T-cell (primary cell): ENCODE measurements at regions of chr12 and their contacts with region 1.

Region 1: DNA sequence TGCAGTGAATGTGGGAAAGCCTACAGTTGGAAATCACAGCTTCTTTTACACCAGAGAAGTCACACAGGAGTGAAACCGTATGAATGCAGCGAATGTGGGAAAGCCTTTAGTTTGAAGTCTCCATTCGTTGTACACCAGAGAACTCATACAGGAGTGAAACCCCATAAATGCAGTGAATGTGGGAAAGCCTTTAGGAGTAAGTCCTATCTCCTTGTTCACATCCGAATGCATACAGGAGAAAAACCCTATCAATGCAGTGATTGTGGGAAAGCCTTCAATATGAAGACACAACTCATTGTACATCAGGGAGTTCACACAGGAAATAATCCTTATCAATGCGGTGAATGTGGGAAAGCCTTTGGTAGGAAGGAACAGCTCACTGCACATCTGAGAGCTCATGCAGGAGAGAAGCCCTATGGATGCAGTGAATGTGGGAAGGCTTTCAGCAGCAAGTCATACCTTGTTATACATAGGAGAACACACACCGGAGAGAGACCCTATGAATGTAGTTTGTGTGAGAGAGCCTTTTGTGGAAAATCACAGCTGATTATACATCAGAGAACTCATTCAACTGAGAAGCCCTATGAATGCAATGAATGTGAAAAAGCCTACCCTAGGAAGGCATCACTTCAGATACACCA is 24.6 kb downstream of the ZNF26 start:
- DNase-seq: no peak
- ATAC-seq: no peak
- H3K4me3 ChIP-seq: peak overlapping the region in 1 of 2 donors; percentile 38
- H3K4me3 Mint-ChIP-seq: no peak overlapping the region
- H3K27ac ChIP-seq: no peak overlapping the region
- H3K27ac Mint-ChIP-seq: no peak overlapping the region
- H3K4me1 ChIP-seq: no peaks in the 10 kb centered on the region
- H3K4me1 Mint-ChIP-seq: no peaks in the 10 kb centered on the region
- H3K27me3 ChIP-seq: no peaks in the 10 kb centered on the region
- H3K27me3 Mint-ChIP-seq: no peaks in the 10 kb centered on the region

Region 2: DNA sequence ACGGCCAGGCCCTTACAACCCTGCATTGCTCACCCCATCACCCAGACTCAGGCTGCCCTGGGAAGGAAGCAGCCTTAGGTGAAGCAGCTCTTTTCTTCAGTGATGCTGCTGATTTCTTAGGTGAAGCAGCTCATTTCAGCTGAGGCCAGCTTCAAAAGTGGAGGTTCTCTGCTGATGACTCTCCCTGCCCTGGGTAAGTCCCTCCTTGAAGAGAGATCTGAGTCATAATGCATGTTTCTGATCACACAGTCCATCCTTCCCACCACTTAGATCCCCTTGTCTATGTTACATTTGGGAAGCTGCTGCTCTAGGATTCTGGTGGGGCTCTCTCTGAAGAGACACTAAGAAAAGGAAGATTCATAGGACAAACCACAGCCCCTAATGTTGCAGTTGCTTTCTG is 52.8 kb after region 1 on chr12:
- CTCF ChIA-PET with region 1: no interaction called
- POLR2A ChIA-PET with region 1: interaction called in 1 of 2 experiments, 13 read pairs
- DNase-seq: no peak
- ATAC-seq: no peak
- H3K4me3 ChIP-seq: peak overlapping the region in 1 of 2 donors; percentile 15
- H3K4me3 Mint-ChIP-seq: no peak overlapping the region
- H3K27ac ChIP-seq: no peak overlapping the region
- H3K27ac Mint-ChIP-seq: no peak overlapping the region
- H3K4me1 ChIP-seq: no peaks in the 10 kb centered on the region
- H3K4me1 Mint-ChIP-seq: no peaks in the 10 kb centered on the region
- H3K27me3 ChIP-seq: no peaks in the 10 kb centered on the region
- H3K27me3 Mint-ChIP-seq: no peaks in the 10 kb centered on the region